H1 (cell line): ENCODE measurements at regions of chr6 and their contacts with region 1.

Region 1: GRCh38 chr6:24827162-24827561 is 28.4 kb upstream of the ARMH2 start:
- DNase-seq: no peak
- H3K4me3 ChIP-seq: no peak overlapping the region
- H3K27ac ChIP-seq: no peak overlapping the region; the same call in 1 of the 2 replicates
- H3K4me1 ChIP-seq: 0 out of 7 replicates have a peak, but pooled peaks cover 0 to 2% (median 0%) of the 10 kb centered on the region in 4 experiments
- H3K27me3 ChIP-seq: no peaks in the 10 kb centered on the region
- CTCF ChIP-seq: no peak
- EP300 ChIP-seq: no peak
- POLR2A ChIP-seq: no peak
- RAD21 ChIP-seq: peak; percentile 23 to 27; a peak in 3 of 4 replicates

Region 2: DNA sequence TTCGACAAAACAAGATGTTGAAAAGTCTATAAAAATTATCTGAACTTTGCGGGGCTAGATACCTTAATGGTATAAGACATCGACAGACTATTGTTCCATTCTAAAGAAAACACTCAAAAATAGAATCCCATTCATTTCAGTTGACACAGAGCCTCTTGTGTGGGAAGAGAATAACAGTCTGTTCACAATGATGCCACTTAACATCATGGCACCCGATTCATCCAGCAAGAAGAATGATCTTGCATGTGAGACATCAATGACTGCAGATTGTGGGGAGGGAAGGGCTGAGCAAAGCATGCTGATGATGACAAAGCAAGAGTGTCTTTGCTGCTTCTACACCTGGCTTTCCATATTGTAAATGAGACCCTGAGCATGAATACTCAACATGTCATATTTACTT is 21.3 kb after region 1 on chr6:
- CTCF ChIA-PET with region 1: interaction called, 15 read pairs
- POLR2A ChIA-PET with region 1: interaction called, 3 read pairs
- DNase-seq: no peak
- H3K4me3 ChIP-seq: no peak overlapping the region
- H3K27ac ChIP-seq: no peak overlapping the region
- H3K4me1 ChIP-seq: no peaks in the 10 kb centered on the region
- H3K27me3 ChIP-seq: no peaks in the 10 kb centered on the region
- CTCF ChIP-seq: no peak
- EP300 ChIP-seq: no peak
- POLR2A ChIP-seq: no peak
- RAD21 ChIP-seq: no peak